ENCODE measurements at regions of chr19 and their contacts with region 1.

Region 1: GRCh38 chr19:47729992-47730889 is 15.1 kb upstream of the NOP53 start:
- DNase-seq: peak in 1 of 2 experiments; percentile 96
- H3K4me3 ChIP-seq: peak overlapping the region; percentile 41 to 73 (median 62)
- H3K27ac ChIP-seq: no peak overlapping the region; the same call in 1 of the 2 replicates
- H3K4me1 ChIP-seq: peaks cover 0 to 9% (median 5%) of the 10 kb centered on the region in 4 experiments; a peak in 2 of 7 replicates
- H3K27me3 ChIP-seq: no peaks in the 10 kb centered on the region
- CTCF ChIP-seq: no peak
- EP300 ChIP-seq: no peak
- POLR2A ChIP-seq: peak in 1 of 2 experiments; percentile 53; a peak in 1 of 3 replicates
- RAD21 ChIP-seq: no peak

Region 2: DNA sequence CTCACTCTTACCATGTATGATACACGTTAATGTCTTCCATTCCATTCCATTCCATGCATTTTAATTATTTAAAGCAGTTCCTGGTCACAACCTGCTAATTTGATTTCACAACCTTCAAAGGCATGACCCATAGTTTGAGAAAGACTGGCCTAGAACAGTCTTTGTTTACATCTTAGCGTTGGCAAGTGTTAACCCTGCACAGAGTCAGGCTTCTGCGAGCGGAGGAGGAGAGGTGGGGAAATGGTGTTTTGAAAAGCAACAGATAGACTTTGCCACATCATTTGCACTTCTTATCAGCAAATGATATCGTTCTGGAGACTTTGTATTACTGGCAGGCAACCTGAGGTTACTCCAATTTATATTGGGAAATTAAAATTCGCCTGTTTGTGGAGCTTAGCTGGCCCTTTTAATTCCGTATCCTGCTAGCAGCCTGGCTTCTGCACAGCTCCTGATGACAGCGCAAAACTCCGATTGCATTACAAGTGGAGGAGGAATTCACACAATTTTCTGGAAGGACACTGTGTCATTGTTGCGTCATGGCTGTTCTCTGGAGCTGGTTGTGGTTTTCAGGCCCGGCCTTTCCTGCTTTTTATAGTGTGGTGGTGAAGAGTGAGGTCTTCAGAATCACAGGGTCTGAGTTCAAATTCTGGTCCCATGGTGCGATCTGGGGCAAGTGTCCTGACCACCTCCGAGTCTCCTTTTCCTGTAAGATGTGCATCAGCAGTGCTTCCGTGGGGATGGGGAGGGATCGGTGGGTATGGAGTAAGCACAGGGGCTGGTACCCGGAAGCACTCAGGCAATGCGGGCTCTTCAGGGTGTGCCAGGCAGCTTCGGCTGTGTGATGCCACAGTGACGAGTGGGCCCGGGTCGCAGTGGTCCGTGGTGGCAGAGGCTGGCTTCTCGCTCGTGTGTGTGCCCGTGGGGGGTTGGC is 66.1 kb before region 1 on chr19:
- CTCF ChIA-PET with region 1: no interaction called
- POLR2A ChIA-PET with region 1: no interaction called
- DNase-seq: no peak
- H3K4me3 ChIP-seq: no peak overlapping the region
- H3K27ac ChIP-seq: no peak overlapping the region
- H3K4me1 ChIP-seq: peaks cover 0 to 6% (median under 1%) of the 10 kb centered on the region in 4 experiments; a peak in 2 of 7 replicates
- H3K27me3 ChIP-seq: no peaks in the 10 kb centered on the region
- CTCF ChIP-seq: no peak
- EP300 ChIP-seq: no peak
- POLR2A ChIP-seq: no peak
- RAD21 ChIP-seq: no peak

Region 3: DNA sequence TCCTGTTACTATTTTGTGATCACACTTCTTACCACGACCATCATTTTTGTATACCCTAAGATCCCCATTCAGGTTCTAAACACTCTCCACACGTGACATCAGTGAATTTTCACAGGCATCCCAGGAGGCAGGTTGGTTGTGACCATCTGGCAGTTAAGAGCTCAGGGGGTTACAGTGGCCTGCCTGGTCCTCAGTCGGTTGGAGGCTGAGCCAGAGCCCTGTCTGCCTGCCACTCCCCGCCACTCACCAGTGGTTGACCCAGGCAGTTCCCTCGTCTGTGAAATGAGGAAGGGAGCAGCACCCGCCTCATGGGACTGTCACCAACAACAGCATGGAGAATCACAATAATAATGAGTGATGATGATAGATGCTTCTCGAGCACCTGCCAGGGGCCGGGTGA is 53.4 kb before region 1 on chr19:
- CTCF ChIA-PET with region 1: no interaction called
- POLR2A ChIA-PET with region 1: no interaction called
- DNase-seq: no peak
- H3K4me3 ChIP-seq: no peak overlapping the region
- H3K27ac ChIP-seq: no peak overlapping the region
- H3K4me1 ChIP-seq: 0 out of 7 replicates have a peak, but pooled peaks cover 0 to 2% (median 0%) of the 10 kb centered on the region in 4 experiments
- H3K27me3 ChIP-seq: no peaks in the 10 kb centered on the region
- CTCF ChIP-seq: no peak
- EP300 ChIP-seq: no peak
- POLR2A ChIP-seq: no peak
- RAD21 ChIP-seq: no peak

Region 4: GRCh38 chr19:47707135-47707925 is 22.9 kb before region 1 on chr19:
- CTCF ChIA-PET with region 1: interaction called, 143 read pairs
- POLR2A ChIA-PET with region 1: no interaction called
- DNase-seq: peak in 1 of 2 experiments; percentile 94
- H3K4me3 ChIP-seq: no peak overlapping the region
- H3K27ac ChIP-seq: no peak overlapping the region
- H3K4me1 ChIP-seq: no peaks in the 10 kb centered on the region
- H3K27me3 ChIP-seq: no peaks in the 10 kb centered on the region
- CTCF ChIP-seq: peak; percentile 91 to 93 (median 92)
- EP300 ChIP-seq: peak in 1 of 2 experiments; percentile 40; a peak in 1 of 3 replicates
- POLR2A ChIP-seq: no peak
- RAD21 ChIP-seq: peak; percentile 90 to 91

Region 5: GRCh38 chr19:47713046-47714021 is 16.9 kb before region 1 on chr19 and contains the start of gene EHD2:
- CTCF ChIA-PET with region 1: interaction called, 143 read pairs
- POLR2A ChIA-PET with region 1: interaction called, 4 read pairs
- DNase-seq: peak in 1 of 2 experiments; percentile 89
- H3K4me3 ChIP-seq: peak within 1 kb of the TSS; percentile 47 to 66 (median 56)
- H3K27ac ChIP-seq: no peak within 1 kb of the TSS
- H3K4me1 ChIP-seq: no peaks in the 10 kb centered on the region
- H3K27me3 ChIP-seq: no peaks in the 10 kb centered on the region
- CTCF ChIP-seq: peak; percentile 74 to 84 (median 81)
- EP300 ChIP-seq: no peak
- POLR2A ChIP-seq: no peak
- RAD21 ChIP-seq: peak; percentile 77 to 81
- total RNA-seq, gene EHD2: 13.0 and 14.3 TPM in 2 replicates

Region 6: DNA sequence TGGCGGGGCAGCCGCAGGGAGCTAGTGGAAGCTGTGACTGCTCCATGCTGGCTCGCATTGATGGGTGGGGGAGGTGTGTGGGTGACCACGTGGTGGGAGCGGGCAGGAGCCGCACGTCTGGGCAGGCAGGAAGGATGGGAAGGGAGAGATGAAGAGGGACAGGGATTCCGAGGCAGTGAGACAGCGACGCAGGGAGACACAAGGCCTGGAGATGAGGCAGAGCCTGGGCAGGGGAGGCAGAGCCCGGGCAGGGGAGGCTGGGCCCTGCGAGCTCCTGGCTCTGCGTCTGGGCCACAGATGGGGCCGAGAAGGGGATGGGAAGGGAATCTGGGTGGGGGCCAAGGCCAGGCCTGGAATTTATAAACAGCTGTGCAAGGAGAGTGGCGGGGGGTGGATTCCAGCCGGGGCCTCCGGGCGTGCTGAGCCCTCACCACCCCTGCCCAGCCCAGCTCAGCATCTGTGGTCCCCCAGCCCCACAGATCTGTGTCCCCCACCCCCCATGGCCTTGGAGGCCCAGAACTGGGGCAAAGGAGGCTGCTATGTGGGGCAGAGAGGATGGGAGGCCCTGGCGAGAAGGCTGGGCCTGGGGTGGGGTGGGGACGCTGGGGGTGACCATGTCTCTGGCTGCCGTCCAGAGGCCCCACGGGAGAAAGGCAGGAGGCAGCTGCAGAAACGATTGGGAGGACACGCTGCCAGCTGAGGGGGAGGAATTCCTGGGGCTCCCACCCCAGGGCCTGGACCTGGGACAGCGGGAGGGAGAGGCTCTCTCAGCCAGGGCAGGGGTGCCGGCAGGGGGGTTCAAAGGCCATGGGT is 11.0 kb before region 1 on chr19:
- CTCF ChIA-PET with region 1: interaction called, 143 read pairs
- POLR2A ChIA-PET with region 1: interaction called, 10 read pairs
- DNase-seq: no peak
- H3K4me3 ChIP-seq: no peak overlapping the region
- H3K27ac ChIP-seq: peak overlapping the region; percentile 36; the same call in 1 of the 2 replicates
- H3K4me1 ChIP-seq: peaks cover 0 to 4% (median 3%) of the 10 kb centered on the region in 4 experiments; a peak in 4 of 7 replicates
- H3K27me3 ChIP-seq: no peaks in the 10 kb centered on the region
- CTCF ChIP-seq: no peak
- EP300 ChIP-seq: no peak
- POLR2A ChIP-seq: no peak
- RAD21 ChIP-seq: no peak

Region 7: GRCh38 chr19:47839913-47840312 is 109.7 kb after region 1 on chr19:
- CTCF ChIA-PET with region 1: no interaction called
- POLR2A ChIA-PET with region 1: no interaction called
- DNase-seq: no peak
- H3K4me3 ChIP-seq: no peak overlapping the region
- H3K27ac ChIP-seq: no peak overlapping the region
- H3K4me1 ChIP-seq: peaks cover 0 to 10% (median 4%) of the 10 kb centered on the region in 4 experiments; a peak in 3 of 7 replicates
- H3K27me3 ChIP-seq: no peaks in the 10 kb centered on the region
- CTCF ChIP-seq: no peak
- EP300 ChIP-seq: no peak
- POLR2A ChIP-seq: no peak
- RAD21 ChIP-seq: no peak

Measured in H1 (cell line).